ENCODE measurements at regions of chr20 and their contacts with region 1.

Region 1: DNA sequence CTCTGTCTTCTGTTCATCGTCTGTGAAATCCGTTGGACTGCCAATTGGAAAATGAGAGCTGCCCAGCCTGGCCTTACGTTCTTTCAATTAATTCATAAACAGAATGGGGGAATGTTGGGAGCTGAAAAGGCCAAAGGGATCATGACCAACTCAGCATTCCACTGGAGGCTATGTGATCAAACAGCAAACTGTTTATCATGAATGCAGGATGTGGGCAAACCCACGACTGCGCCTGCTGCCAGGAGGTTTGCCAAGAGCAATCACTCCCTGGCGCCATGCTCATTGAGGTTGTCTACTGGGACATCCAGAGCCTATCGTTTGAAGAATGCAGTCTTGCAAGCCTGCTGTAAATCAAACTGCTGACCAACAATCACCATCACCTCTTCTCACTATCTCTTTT is 9.3 kb upstream of the FKBP1A start:
- DNase-seq: peak; percentile 73
- H3K4me3 ChIP-seq: no peak overlapping the region
- H3K27ac ChIP-seq: no peak overlapping the region
- H3K4me1 ChIP-seq: peaks cover 36% of the 10 kb centered on the region
- H3K27me3 ChIP-seq: no peaks in the 10 kb centered on the region
- CTCF ChIP-seq: no peak

Region 2: GRCh38 chr20:1415667-1416468 is 13.7 kb after region 1 on chr20:
- CTCF ChIA-PET with region 1: no interaction called
- dilution Hi-C with region 1: no loop called
- in situ Hi-C with region 1: no loop called
- intact Hi-C with region 1: loop called (anchors 2 kb)
- DNase-seq: peak; percentile 98
- H3K4me3 ChIP-seq: no peak overlapping the region
- H3K27ac ChIP-seq: peak overlapping the region; percentile 68
- H3K4me1 ChIP-seq: peaks cover 40% of the 10 kb centered on the region
- H3K27me3 ChIP-seq: no peaks in the 10 kb centered on the region
- CTCF ChIP-seq: no peak

Region 3: GRCh38 chr20:2195614-2196013 is 793.5 kb after region 1 on chr20:
- CTCF ChIA-PET with region 1: no interaction called
- dilution Hi-C with region 1: no loop called
- in situ Hi-C with region 1: no loop called
- intact Hi-C with region 1: no loop called
- DNase-seq: no peak
- H3K4me3 ChIP-seq: no peak overlapping the region
- H3K27ac ChIP-seq: no peak overlapping the region
- H3K4me1 ChIP-seq: no peaks in the 10 kb centered on the region
- H3K27me3 ChIP-seq: no peaks in the 10 kb centered on the region
- CTCF ChIP-seq: no peak

Measured in mammary epithelial cell (primary cell).